ENCODE measurements at regions of chr5 and their contacts with region 1.

Region 1: DNA sequence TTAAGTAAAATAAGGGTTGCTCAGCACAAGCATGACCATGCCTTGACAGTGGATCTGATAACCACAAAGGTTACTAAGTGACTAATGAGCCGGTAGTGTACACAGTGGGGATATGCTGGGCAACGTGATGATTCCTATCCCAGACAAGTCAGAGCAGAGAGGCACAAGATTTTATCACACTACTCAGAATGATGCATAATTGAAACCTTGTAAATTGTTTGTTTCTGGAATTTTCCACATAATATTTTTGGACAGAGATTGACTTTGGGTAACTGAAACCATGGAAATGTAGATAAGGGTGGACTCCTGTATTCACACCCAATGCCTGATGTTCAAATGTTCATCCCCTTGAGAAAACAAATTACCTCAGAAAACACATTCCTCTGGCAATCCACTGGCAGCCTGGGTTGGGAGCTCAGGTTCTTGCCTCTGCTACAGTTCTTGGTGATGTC is 16.2 kb upstream of the ERAP1 start:
- DNase-seq: no peak
- ATAC-seq: peak; percentile 48
- H3K4me3 ChIP-seq: no peak overlapping the region
- H3K4me3 Mint-ChIP-seq: no peak overlapping the region
- H3K27ac ChIP-seq: no peak overlapping the region
- H3K27ac Mint-ChIP-seq: peak overlapping the region in 1 of 9 donors; percentile 35
- H3K4me1 ChIP-seq: peaks cover 0 to 29% of the 10 kb centered on the region in 2 donors
- H3K4me1 Mint-ChIP-seq: peaks cover 15 to 49% (median 46%) of the 10 kb centered on the region in 7 donors
- H3K27me3 ChIP-seq: no peaks in the 10 kb centered on the region
- H3K27me3 Mint-ChIP-seq: peaks cover 0 to 21% (median 0%) of the 10 kb centered on the region in 5 donors

Region 2: GRCh38 chr5:96344678-96345577 is 479.0 kb before region 1 on chr5:
- CTCF ChIA-PET with region 1: no interaction called
- POLR2A ChIA-PET with region 1: no interaction called
- intact Hi-C with region 1: loop called in 1 of 2 experiments (anchors 2 kb)
- DNase-seq: peak in 7 of 9 donors; percentile 33 to 70 (median 59)
- ATAC-seq: peak; percentile 91
- H3K4me3 ChIP-seq: no peak overlapping the region
- H3K4me3 Mint-ChIP-seq: peak overlapping the region; percentile 1 to 72 (median 48)
- H3K27ac ChIP-seq: no peak overlapping the region
- H3K27ac Mint-ChIP-seq: peak overlapping the region in 6 of 9 donors; percentile 3 to 53 (median 10)
- H3K4me1 ChIP-seq: peaks cover 6 to 7% of the 10 kb centered on the region in 2 donors
- H3K4me1 Mint-ChIP-seq: peaks cover 5 to 21% (median 18%) of the 10 kb centered on the region in 7 donors
- H3K27me3 ChIP-seq: no peaks in the 10 kb centered on the region
- H3K27me3 Mint-ChIP-seq: peaks cover 0 to 38% (median 8%) of the 10 kb centered on the region in 5 donors

Region 3: DNA sequence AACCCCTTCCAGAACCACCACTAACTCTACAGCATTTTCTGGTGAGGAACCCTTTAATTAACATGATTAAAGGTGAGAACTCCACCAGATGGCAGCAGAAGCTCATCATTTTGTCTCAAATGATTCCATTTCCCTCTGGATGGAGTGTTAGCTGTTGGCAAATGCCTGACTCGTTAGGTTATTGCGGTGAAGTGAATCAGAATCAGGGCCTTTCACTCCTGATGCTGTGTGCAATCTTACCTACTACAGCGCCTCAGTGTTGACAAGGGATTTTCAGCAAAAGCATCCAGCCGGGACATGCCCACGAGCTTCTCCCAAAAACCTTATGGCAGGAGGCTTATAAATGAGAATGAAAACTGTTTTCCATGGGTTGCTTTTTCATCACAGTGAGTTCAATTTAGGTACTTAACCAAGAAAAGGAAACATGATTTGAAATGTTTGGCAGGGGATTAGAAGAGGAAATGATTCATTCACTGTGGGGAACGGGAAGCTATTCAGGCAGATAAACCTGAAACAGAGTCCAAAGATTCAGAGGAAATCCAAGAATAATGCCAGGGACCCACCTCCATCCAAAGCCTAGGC is 209.7 kb before region 1 on chr5:
- CTCF ChIA-PET with region 1: no interaction called
- POLR2A ChIA-PET with region 1: no interaction called
- intact Hi-C with region 1: loop called in 1 of 2 experiments (anchors 1 kb)
- DNase-seq: peak in 6 of 9 donors; percentile 30 to 51 (median 38)
- ATAC-seq: peak; percentile 72
- H3K4me3 ChIP-seq: no peak overlapping the region
- H3K4me3 Mint-ChIP-seq: no peak overlapping the region
- H3K27ac ChIP-seq: no peak overlapping the region
- H3K27ac Mint-ChIP-seq: no peak overlapping the region
- H3K4me1 ChIP-seq: peaks cover 0 to 5% of the 10 kb centered on the region in 2 donors
- H3K4me1 Mint-ChIP-seq: peaks cover 0 to 5% (median 0%) of the 10 kb centered on the region in 7 donors
- H3K27me3 ChIP-seq: no peaks in the 10 kb centered on the region
- H3K27me3 Mint-ChIP-seq: peaks cover 5 to 43% (median 8%) of the 10 kb centered on the region in 5 donors

Region 4: DNA sequence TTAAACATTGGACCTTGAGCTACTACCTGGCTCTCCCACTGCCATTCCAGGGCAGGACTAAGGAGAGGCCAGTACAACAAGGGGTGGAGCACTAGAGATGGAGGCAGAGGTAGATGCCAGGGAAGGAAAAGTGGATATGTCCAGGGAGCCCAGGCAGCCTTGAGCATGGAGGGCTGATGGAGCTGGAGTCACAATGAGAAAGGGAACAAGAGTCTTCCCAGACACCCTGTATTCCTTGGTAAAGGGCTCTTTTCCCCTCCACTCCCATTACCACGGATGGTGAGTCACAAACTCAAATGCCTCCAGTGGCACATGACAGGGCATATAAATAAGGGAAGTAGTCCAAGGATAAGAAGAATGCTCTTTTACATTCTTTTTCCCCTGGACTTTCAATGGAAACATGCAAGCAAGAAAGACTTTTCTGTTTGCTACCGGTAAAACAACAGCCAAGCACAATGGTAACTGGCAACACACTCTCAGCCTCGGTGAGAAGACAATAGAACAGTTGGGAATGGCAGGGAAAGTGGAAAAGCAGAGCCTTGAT is 32.9 kb before region 1 on chr5:
- CTCF ChIA-PET with region 1: no interaction called
- POLR2A ChIA-PET with region 1: interaction called, 7 read pairs
- intact Hi-C with region 1: loop called in 1 of 2 experiments (anchors 1 kb)
- DNase-seq: no peak
- ATAC-seq: peak; percentile 46
- H3K4me3 ChIP-seq: no peak overlapping the region
- H3K4me3 Mint-ChIP-seq: no peak overlapping the region
- H3K27ac ChIP-seq: peak overlapping the region; percentile 24
- H3K27ac Mint-ChIP-seq: peak overlapping the region; percentile 66 to 87 (median 72)
- H3K4me1 ChIP-seq: peaks cover 9 to 14% of the 10 kb centered on the region in 2 donors
- H3K4me1 Mint-ChIP-seq: peaks cover 19 to 51% (median 43%) of the 10 kb centered on the region in 7 donors
- H3K27me3 ChIP-seq: no peaks in the 10 kb centered on the region
- H3K27me3 Mint-ChIP-seq: no peaks in the 10 kb centered on the region